ENCODE measurements at regions of chr1 and their contacts with region 1.

Region 1: GRCh38 chr1:41432481-41433280 is 51.8 kb downstream of the EDN2 start:
- DNase-seq: peak; percentile 94
- ATAC-seq: peak; percentile 90

Region 2: DNA sequence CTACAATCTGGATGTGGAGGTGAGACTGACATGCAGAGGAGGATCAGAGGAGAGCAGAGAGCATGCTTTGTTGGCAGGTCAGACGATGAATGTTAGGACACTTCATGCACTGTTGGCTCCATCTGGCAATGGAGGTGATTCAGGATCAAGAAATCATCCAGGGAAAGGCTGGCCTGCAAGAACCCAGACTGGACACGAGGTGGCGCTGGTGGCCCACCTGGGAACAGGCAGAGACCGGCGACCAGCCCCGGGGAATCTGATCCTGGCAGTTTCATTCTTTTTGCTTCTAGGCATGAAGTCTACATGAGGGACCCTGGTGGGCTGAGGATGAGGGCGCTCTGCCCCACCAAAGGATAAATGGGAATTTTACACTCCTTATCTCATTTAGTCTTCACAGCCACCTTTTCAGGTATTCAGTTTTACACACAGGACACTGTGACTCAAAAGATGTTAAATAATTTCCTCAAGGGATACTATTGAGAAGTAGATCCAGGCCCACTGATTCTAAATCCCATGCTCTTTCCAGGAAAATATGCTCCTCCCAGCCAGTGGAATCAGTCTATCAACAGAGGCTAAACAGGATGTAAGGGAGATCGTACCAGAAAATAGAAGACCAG is 164.4 kb before region 1 on chr1:
- intact Hi-C with region 1: loop called (anchors 2 kb)
- DNase-seq: peak; percentile 87
- ATAC-seq: peak; percentile 82

Region 3: DNA sequence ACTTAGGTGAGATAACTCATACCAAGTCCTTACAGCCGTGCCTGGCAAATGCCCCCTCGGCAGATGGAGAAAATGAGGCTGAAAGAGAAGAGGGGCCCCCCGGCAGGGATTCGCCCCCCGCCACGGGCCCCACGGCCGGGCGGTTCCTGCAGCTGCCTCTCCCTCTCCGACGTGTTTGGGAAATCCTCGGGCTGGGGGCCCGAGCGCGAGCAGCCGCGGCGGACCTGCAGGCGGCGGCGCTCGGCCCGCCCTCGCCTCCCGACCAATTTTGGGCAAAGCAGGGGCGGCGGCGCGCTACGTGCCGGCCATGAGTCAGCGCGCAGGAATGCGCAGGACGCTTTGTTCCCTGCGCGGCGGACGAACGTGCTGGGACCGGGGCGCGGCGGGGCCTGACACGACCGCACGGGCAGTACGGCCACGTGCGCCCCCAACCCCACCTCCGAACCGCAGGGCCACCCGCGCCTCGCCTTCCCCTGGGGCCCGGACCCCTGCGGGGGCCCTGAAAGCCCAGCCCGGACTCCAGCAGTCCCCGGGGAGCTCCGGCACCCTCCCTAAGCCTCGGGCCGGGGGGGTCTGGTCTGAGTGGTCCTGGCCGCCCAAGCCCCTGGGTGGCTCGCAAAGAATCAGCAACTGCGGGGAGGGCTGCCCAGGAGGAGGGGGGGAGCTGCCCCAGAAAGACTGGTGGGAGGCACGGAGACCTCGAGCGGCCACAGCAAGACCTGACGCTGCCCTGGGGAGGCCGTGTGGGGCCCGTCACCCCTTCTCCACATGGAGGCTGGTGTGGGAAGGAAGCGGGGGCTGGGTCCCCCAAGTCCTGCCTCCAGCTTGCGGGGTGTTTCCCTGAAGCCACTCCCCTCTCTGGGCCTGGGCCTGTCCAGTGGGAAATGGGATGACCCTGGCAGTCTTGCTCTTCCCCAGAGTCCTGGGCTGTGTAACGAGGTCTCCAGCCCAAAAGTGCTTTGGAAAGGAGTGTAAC is 63.7 kb after region 1 on chr1:
- intact Hi-C with region 1: loop called (anchors 5 kb)
- DNase-seq: peak; percentile 92
- ATAC-seq: peak; percentile 79

Measured in Right ventricle myocardium inferior (tissue), 1 donor.